Activated naive CD4-positive, alpha-beta T cell treated with anti-CD3 and anti-CD28 coated beads for 36 hours (primary cell): ENCODE measurements at regions of chr1 and their contacts with region 1.

Region 1: GRCh38 chr1:241485554-241485992 is 34.0 kb downstream of the FH start:
- DNase-seq: no peak
- H3K4me3 Mint-ChIP-seq: no peak overlapping the region
- H3K27ac Mint-ChIP-seq: no peak overlapping the region
- H3K4me1 Mint-ChIP-seq: peaks cover 17% of the 10 kb centered on the region
- H3K27me3 Mint-ChIP-seq: peaks cover 5% of the 10 kb centered on the region

Region 2: DNA sequence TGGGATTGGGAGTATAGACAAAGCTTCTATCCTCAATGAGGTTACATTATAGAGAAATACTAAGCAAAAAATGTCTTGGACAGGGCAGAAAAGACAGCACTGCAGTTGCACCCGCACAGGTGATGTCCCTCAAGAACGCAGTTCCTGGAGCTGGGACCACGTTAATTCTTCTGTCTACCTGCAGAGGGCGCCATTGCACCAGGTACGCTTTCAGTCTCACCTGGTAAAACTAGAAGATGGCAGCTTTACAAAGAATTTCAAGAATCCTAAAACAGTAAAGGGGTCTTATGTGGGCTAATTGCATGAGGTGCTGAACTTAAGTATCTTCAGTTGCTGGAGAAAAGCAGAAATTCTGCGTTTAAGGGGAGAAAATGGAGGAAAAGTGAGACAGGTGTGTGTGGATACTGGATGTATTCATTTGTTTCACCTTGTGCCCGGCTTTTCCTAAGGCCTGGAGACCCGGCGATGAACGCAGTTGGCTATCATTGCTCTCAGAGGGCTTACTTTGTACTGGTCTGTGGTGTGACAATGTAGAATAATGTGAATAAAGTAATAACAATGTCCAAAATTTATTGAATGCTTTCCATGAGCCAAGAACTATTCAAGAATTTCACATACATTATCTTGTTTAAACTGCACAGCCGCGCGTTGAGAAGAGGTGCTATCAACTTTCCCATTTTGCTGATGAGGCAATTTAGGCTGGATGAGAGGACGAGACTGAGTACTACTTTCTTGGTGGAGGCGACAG is 597.4 kb before region 1 on chr1:
- CTCF ChIA-PET with region 1: interaction called, 3 read pairs
- intact Hi-C with region 1: loop called (anchors 5 kb)
- DNase-seq: peak; percentile 52
- H3K4me3 Mint-ChIP-seq: no peak overlapping the region
- H3K27ac Mint-ChIP-seq: no peak overlapping the region
- H3K4me1 Mint-ChIP-seq: no peaks in the 10 kb centered on the region
- H3K27me3 Mint-ChIP-seq: no peaks in the 10 kb centered on the region

Region 3: GRCh38 chr1:241423541-241424479 is 61.8 kb before region 1 on chr1:
- CTCF ChIA-PET with region 1: no interaction called
- intact Hi-C with region 1: loop called (anchors 1 kb)
- DNase-seq: peak; percentile 41
- H3K4me3 Mint-ChIP-seq: peak overlapping the region; percentile 27
- H3K27ac Mint-ChIP-seq: no peak overlapping the region
- H3K4me1 Mint-ChIP-seq: peaks cover 2% of the 10 kb centered on the region
- H3K27me3 Mint-ChIP-seq: peaks cover 50% of the 10 kb centered on the region